Activated naive CD4-positive, alpha-beta T cell treated with anti-CD3 and anti-CD28 coated beads for 36 hours (primary cell): ENCODE measurements at regions of chr7 and their contacts with region 1.

Region 1: GRCh38 chr7:141701489-141702046 is 398 bp downstream of the DENND11 start:
- DNase-seq: peak; percentile 83
- H3K4me3 Mint-ChIP-seq: peak overlapping the region; percentile 76
- H3K27ac Mint-ChIP-seq: peak overlapping the region; percentile 39
- H3K4me1 Mint-ChIP-seq: peaks cover 45% of the 10 kb centered on the region
- H3K27me3 Mint-ChIP-seq: peaks cover 5% of the 10 kb centered on the region

Region 2: GRCh38 chr7:141551094-141551781 is 150.3 kb before region 1 on chr7 and contains the start of gene AGK:
- CTCF ChIA-PET with region 1: no interaction called
- intact Hi-C with region 1: loop called (anchors 2 kb)
- DNase-seq: peak; percentile 83
- H3K4me3 Mint-ChIP-seq: peak within 1 kb of the TSS; percentile 86
- H3K27ac Mint-ChIP-seq: peak within 1 kb of the TSS; percentile 85
- H3K4me1 Mint-ChIP-seq: peaks cover 36% of the 10 kb centered on the region
- H3K27me3 Mint-ChIP-seq: no peaks in the 10 kb centered on the region
- total RNA-seq, gene AGK: 35.8 to 37.9 TPM

Region 3: DNA sequence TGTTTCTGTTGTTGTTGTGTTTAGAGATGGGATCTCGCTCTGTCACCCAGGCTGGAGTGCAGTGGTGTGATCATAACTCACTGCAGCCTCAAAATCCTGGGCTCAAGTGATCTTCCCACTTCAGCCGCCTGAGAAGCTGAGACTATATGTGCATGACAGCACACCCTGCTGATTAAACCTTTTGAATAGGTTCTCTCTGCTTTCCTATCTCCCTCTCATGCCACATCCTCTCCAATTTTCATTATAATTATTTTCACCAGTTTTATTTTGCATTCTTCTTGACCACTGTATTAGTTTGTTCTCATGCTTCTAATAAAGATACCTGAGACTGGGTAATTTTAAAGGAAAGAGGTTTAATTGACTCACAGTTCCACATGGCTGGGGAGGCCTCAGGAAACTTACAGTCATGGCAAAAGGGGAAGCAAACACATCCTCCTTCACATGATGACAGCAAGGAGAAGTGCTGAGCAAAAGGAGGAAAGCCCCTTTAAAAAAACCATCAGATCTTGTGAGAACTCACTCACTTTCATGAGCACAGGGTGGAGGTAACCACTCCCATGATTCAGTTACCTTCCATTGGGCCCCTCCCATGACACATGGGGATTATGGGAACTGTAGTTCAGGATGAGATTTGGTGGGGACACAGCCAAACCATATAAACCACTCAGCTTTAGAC is 137.5 kb before region 1 on chr7:
- CTCF ChIA-PET with region 1: no interaction called
- intact Hi-C with region 1: loop called (anchors 2 kb)
- DNase-seq: peak; percentile 70
- H3K4me3 Mint-ChIP-seq: no peak overlapping the region
- H3K27ac Mint-ChIP-seq: peak overlapping the region; percentile 35
- H3K4me1 Mint-ChIP-seq: peaks cover 55% of the 10 kb centered on the region
- H3K27me3 Mint-ChIP-seq: no peaks in the 10 kb centered on the region

Region 4: DNA sequence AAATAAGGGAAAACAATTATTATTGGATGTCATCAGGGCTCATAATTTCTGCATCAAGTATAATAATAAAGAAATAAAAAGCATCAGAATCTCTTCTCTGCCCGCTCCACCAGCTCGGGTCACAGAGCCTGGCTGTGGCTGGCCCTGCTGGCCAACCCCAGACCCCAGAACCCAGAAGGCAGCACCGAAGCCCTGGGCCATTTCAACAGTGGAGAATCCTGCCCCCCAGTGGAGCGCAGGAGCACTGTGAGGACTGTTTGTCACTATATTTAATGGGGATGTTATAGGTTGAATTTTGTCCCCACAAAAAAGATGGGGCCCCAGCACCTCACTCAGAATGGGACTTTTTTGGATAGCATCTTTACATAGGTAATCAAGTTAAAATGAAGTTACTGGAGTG is 26.9 kb before region 1 on chr7:
- CTCF ChIA-PET with region 1: interaction called, 3 read pairs
- intact Hi-C with region 1: loop called (anchors 2 kb)
- DNase-seq: peak; percentile 15
- H3K4me3 Mint-ChIP-seq: no peak overlapping the region
- H3K27ac Mint-ChIP-seq: no peak overlapping the region
- H3K4me1 Mint-ChIP-seq: peaks cover 17% of the 10 kb centered on the region
- H3K27me3 Mint-ChIP-seq: no peaks in the 10 kb centered on the region